ENCODE measurements at regions of chr9 and their contacts with region 1.

Region 1: DNA sequence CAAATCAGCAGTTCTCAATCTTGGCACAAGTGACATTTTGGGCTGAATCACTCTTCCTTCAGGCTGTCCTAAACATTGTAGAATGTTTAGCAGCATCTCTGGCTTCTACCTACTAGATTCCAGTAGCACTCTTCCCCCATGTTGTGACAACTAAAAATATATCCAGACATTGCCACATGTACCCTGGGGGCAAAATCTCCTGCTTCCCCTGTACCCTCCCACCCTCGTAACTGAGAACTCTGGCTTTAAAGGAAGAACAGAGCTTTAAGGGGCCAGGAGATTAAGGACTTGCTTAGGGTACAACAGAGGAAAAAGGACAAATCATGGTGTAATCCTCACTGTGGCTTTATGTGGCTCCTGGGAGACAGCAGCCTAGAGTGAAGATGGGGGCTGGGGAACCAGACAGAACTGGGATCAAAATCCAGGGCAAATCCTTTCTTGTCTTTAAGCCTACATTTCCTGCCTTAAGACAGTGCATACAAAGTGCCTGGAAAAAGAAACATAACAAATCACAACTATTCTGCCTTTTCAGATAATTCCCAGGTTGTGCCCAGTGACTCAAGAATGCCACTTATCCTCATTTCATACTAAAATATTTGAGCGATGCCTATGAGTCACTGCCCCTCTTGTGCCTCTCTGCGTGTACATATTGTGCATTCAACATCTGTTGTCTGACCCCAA is 109.3 kb downstream of the DAPK1 start:
- DNase-seq: peak; percentile 31 to 89
- H3K4me3 ChIP-seq: no peak overlapping the region
- H3K27ac ChIP-seq: peak overlapping the region; percentile 88
- H3K4me1 ChIP-seq: peaks cover 32% of the 10 kb centered on the region
- H3K27me3 ChIP-seq: no peaks in the 10 kb centered on the region
- CTCF ChIP-seq: no peak

Region 2: DNA sequence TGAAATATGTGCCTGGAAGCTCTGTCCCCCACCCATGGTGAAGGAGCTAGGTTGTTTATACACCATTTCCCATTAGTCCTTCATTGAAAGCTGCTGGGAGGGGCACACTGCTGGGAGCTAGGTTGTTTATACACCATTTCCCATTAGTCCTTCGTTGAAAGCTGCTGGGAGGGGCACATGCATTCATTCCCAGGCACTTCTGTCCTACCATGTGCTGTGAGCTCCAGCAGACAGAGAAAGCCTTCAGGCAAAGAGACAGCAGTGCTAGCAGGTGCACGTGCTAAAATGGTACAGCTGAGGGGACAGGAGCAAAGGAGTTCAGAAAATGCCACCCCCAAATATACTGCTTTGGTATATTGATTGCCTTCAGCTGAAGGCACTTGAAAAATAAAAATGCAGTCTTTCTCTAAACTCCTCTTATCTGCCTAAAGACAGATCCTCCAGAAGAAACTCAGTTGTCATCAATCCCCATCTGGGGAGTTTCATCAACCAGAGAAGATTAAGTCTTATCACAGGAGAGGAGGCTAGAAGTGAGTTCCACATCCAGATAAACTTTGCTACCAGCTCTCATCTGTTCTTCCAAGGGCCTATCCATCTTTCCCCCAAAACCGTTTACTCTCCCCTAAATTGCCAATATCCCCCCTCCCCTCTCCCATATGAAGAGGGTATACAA is 137.1 kb before region 1 on chr9:
- CTCF ChIA-PET with region 1: interaction called, 10 read pairs
- POLR2A ChIA-PET with region 1: no interaction called
- intact Hi-C with region 1: no loop called
- DNase-seq: no peak
- H3K4me3 ChIP-seq: no peak overlapping the region
- H3K27ac ChIP-seq: no peak overlapping the region
- H3K4me1 ChIP-seq: peaks cover 3% of the 10 kb centered on the region; the same call in 1 of the 2 replicates
- H3K27me3 ChIP-seq: no peaks in the 10 kb centered on the region
- CTCF ChIP-seq: no peak

Measured in PC-9 (cell line).